Activated T-helper 1 cell treated with anti-CD3 and anti-CD28 coated beads, Interleukin-12 subunit alpha, Interleukin-12 subunit beta, Interleukin-2, Interleukin-4 antibody, amounts not matched to agents 30 ng/mL and 10 ng/mL and 1 ng/mL, durations not matched to agents 14 hours and 24 hours and 36 hours (primary cell): ENCODE measurements at regions of chr12 and their contacts with region 1.

Region 1: DNA sequence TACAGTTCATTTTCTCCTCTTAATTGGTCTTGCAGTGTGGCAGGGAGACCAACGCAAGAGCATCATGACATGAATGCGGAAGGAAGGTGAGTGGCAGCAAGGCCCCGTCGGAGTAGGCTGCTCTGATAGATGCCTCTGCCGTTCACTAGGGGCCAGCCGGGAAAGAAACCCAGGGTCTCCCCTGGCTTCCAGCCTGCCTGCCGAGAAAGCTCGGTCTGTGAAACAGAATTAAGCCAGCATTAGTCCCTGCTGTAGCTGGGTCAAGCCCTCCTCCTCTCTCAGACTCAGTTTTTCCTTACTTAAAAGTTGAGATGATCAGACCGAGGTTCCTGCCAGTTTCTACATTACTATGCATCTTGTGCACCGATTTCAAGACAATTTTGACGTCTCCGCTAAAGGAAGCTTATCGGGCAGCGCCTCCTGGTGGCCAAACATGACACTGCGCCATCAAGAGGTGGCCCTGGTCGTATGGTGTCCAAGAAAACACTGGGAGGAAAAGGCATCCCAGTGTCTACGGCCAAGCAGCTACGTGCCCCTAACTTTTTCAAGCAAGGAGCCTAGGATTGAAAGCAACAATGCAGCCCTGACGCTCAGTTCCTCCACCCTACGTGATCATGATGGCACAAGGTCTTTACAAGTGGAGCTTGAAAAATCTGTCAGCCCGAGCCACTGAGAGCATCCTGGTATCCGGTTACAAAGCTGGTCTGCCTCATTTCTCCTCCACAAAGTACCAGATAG is 131.6 kb downstream of the KSR2 start:
- DNase-seq: peak; percentile 54
- H3K4me3 Mint-ChIP-seq: no peak overlapping the region
- H3K27ac Mint-ChIP-seq: no peak overlapping the region
- H3K4me1 Mint-ChIP-seq: peaks cover 5% of the 10 kb centered on the region
- H3K27me3 Mint-ChIP-seq: peaks cover 2% of the 10 kb centered on the region

Region 2: DNA sequence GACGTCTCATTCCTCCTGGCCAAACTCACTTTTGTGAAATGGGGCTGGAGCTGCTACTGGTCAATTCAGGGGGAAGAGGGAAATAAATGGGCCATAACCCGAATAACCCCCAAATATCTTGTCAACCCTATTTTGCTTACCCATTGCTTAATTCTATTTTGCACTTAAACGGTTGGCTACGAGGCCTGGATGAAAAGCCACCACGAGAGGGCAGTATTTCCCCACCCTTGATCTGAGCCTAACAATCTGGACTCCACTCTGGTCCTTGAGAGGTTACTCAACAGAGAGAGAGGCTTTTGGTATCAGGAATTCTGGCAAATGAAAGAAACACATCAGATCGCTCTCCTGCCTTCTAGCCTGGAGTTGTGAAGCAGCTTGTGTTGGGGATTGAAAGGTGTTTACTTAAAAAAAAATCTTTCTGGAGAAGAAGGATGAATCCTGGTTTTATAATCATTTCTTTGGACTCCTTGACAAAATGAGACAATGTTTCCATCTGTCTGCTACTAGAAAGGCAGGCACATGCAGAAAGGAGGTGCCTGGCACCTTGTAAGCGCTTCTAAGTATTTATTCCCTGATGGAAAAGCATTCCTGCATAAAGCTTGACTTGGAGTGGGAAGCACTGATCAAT is 624.5 kb before region 1 on chr12:
- intact Hi-C with region 1: loop called (anchors 1 kb)
- DNase-seq: peak; percentile 22
- H3K4me3 Mint-ChIP-seq: no peak overlapping the region
- H3K27ac Mint-ChIP-seq: no peak overlapping the region
- H3K4me1 Mint-ChIP-seq: no peaks in the 10 kb centered on the region
- H3K27me3 Mint-ChIP-seq: peaks cover 9% of the 10 kb centered on the region

Region 3: GRCh38 chr12:117236456-117237001 is 600.6 kb before region 1 on chr12:
- intact Hi-C with region 1: loop called (anchors 1 kb)
- DNase-seq: peak; percentile 52
- H3K4me3 Mint-ChIP-seq: no peak overlapping the region
- H3K27ac Mint-ChIP-seq: no peak overlapping the region
- H3K4me1 Mint-ChIP-seq: no peaks in the 10 kb centered on the region
- H3K27me3 Mint-ChIP-seq: peaks cover 3% of the 10 kb centered on the region

Region 4: DNA sequence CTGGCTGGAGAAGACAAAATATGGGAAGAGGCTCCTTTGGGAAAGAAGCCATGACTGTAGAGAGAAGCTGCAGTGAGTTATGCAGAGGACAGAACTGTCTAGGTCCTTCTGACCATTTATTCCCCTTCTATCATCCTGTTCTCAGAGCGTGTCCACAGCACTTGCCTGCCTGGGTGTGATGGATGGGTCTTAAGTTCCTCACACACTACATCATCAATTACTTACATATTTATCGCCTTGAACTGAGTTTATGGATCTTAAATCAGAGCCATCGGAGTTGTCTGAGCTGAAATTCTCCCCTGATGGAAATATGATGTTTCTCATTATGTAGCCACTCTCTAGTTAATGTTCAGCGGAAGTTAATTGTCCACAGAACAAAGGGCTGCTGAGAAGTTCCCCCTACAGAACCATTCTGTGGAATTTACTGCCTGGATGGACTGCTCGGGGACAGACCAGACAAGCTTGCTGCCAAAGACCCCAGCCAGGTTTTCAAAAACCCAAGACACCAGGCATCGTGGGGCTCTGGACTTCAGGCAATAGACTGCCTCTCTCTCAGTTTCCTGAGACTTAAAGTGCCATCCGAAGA is 243.3 kb before region 1 on chr12:
- intact Hi-C with region 1: loop called (anchors 2 kb)
- DNase-seq: no peak
- H3K4me3 Mint-ChIP-seq: no peak overlapping the region
- H3K27ac Mint-ChIP-seq: no peak overlapping the region
- H3K4me1 Mint-ChIP-seq: no peaks in the 10 kb centered on the region
- H3K27me3 Mint-ChIP-seq: no peaks in the 10 kb centered on the region

Region 5: GRCh38 chr12:117774941-117775775 is 62.0 kb before region 1 on chr12:
- intact Hi-C with region 1: no loop called
- DNase-seq: no peak
- H3K4me3 Mint-ChIP-seq: no peak overlapping the region
- H3K27ac Mint-ChIP-seq: no peak overlapping the region
- H3K4me1 Mint-ChIP-seq: no peaks in the 10 kb centered on the region
- H3K27me3 Mint-ChIP-seq: no peaks in the 10 kb centered on the region